ENCODE measurements at regions of chr12 and their contacts with region 1.

Region 1: GRCh38 chr12:3299929-3300832 is 190.8 kb upstream of the PRMT8 start:
- DNase-seq: peak; percentile 98
- H3K4me3 ChIP-seq: peak overlapping the region; percentile 10 to 39 (median 16)
- H3K27ac ChIP-seq: peak overlapping the region in 1 of 4 donors; percentile 53
- H3K4me1 ChIP-seq: peaks cover 13 to 23% (median 20%) of the 10 kb centered on the region in 4 donors
- H3K27me3 ChIP-seq: peaks cover 0 to 50% (median 0%) of the 10 kb centered on the region in 4 donors
- CTCF ChIP-seq: peak; percentile 89 to 91 (median 90)
- EP300 ChIP-seq: no peak
- POLR2A ChIP-seq: no peak

Region 2: GRCh38 chr12:3491938-3492792 is 192.0 kb after region 1 on chr12:
- intact Hi-C with region 1: no loop called
- DNase-seq: no peak
- H3K4me3 ChIP-seq: no peak overlapping the region
- H3K27ac ChIP-seq: no peak overlapping the region
- H3K4me1 ChIP-seq: peaks cover 19 to 31% (median 26%) of the 10 kb centered on the region in 4 donors
- H3K27me3 ChIP-seq: peaks cover 3 to 100% (median 48%) of the 10 kb centered on the region in 4 donors
- CTCF ChIP-seq: no peak
- EP300 ChIP-seq: no peak
- POLR2A ChIP-seq: no peak

Region 3: GRCh38 chr12:3803865-3804472 is 503.8 kb after region 1 on chr12:
- intact Hi-C with region 1: loop called (anchors 2 kb)
- DNase-seq: no peak
- H3K4me3 ChIP-seq: no peak overlapping the region
- H3K27ac ChIP-seq: no peak overlapping the region
- H3K4me1 ChIP-seq: no peaks in the 10 kb centered on the region
- H3K27me3 ChIP-seq: no peaks in the 10 kb centered on the region
- CTCF ChIP-seq: peak; percentile 72 to 84 (median 79)
- EP300 ChIP-seq: no peak
- POLR2A ChIP-seq: no peak